ENCODE measurements at regions of chr3 and their contacts with region 1.

Region 1: GRCh38 chr3:58167431-58168351 is 43.1 kb downstream of the DNASE1L3 start:
- DNase-seq: peak; percentile 37
- H3K4me3 ChIP-seq: no peak overlapping the region
- H3K27ac ChIP-seq: no peak overlapping the region
- H3K27me3 ChIP-seq: no peaks in the 10 kb centered on the region
- CTCF ChIP-seq: peak; percentile 98

Region 2: GRCh38 chr3:58008140-58009025 is 159.3 kb before region 1 on chr3 and contains the start of gene FLNB:
- CTCF ChIA-PET with region 1: interaction called, 29 read pairs
- POLR2A ChIA-PET with region 1: interaction called, 3 read pairs
- DNase-seq: no peak
- H3K4me3 ChIP-seq: peak within 1 kb of the TSS; percentile 100
- H3K27ac ChIP-seq: peak within 1 kb of the TSS; percentile 52
- H3K27me3 ChIP-seq: no peaks in the 10 kb centered on the region
- CTCF ChIP-seq: peak; percentile 74
- polyA plus RNA-seq, gene FLNB: 89.6 and 90.4 TPM in 2 replicates

Region 3: DNA sequence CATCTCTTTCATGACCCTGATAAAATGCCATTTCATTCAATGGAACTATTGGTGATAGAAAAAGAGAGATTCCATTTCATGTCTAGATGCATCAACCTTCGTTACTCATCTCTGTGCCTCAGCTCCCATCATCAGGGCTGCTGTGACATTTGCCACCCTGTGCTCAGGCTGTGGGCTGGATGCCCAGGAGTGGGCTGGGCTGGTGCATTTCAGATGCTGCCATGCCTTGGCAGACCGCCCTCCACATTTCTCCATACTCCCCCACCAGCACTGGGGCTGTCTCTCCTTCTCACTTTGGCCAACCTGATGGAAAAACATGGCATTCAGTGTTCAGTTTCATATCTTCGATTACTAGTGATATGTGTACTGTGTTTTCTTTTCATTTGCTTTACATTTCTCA is 16.1 kb before region 1 on chr3:
- CTCF ChIA-PET with region 1: interaction called, 13 read pairs
- POLR2A ChIA-PET with region 1: no interaction called
- DNase-seq: no peak
- H3K4me3 ChIP-seq: no peak overlapping the region
- H3K27ac ChIP-seq: no peak overlapping the region
- H3K27me3 ChIP-seq: no peaks in the 10 kb centered on the region
- CTCF ChIP-seq: no peak

Measured in AG04450 (cell line).